SK-N-SH (cell line): ENCODE measurements at regions of chr17 and their contacts with region 1.

Region 1: GRCh38 chr17:75524953-75525719 is at the start of gene LLGL2:
- DNase-seq: peak; percentile 99
- H3K4me3 ChIP-seq: peak within 1 kb of the TSS; percentile 57 to 67
- H3K27ac ChIP-seq: no peak within 1 kb of the TSS; a peak in 1 of 4 replicates
- H3K4me1 ChIP-seq: peaks cover 0 to 14% of the 10 kb centered on the region in 2 experiments; a peak in 1 of 4 replicates
- H3K27me3 ChIP-seq: peaks cover 12% of the 10 kb centered on the region; the same call in 1 of the 2 replicates
- CTCF ChIP-seq: peak; percentile 45
- EP300 ChIP-seq: no peak
- RAD21 ChIP-seq: peak; percentile 49
- polyA plus RNA-seq, gene LLGL2: 4.4 and 6.7 TPM in 2 replicates

Region 2: DNA sequence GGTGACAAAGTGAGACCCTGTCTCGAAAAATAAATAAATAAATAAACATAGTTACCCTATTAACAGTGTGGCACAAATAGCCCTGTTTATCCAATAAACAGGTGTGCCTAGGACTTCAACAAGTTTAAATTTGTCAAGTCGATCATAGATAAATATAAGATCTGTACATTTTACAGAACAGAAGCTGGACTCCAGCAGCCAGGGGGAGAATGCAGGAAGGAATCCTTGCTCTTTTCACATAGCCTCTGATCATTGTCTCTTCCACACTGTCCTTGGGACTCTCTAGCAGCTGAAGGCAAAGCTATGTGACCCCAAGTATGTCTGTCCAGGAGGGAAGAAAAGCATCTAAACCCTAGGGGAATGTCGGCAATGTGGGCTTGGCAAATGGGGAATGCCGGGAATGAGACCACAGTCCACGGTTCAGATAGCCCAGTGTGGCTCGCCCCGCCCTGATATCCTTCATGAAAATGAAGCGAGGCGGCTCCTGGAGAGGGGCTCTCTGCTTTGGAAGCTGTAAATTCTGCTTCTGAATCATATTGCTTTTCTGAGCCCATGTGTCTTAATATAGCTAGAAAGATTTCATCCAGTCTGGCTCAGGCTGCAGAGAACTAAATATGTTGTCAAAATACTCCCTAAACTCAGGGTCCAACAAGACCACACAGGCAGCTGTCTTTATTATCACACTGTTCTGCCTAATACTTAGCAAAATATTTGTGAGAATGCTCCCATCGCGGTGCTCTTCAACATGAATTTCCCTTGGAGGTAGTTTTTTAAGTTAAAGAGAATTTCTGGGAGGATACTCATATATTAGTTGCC is 94.8 kb before region 1 on chr17:
- CTCF ChIA-PET with region 1: interaction called, 10 read pairs
- POLR2A ChIA-PET with region 1: no interaction called
- DNase-seq: no peak
- H3K4me3 ChIP-seq: no peak overlapping the region
- H3K27ac ChIP-seq: no peak overlapping the region
- H3K4me1 ChIP-seq: no peaks in the 10 kb centered on the region; a peak in 1 of 4 replicates
- H3K27me3 ChIP-seq: no peaks in the 10 kb centered on the region
- CTCF ChIP-seq: no peak
- EP300 ChIP-seq: no peak
- RAD21 ChIP-seq: no peak

Region 3: GRCh38 chr17:75539967-75540711 is 15.0 kb after region 1 on chr17:
- CTCF ChIA-PET with region 1: interaction called, 13 read pairs
- POLR2A ChIA-PET with region 1: interaction called, 3 read pairs
- DNase-seq: peak; percentile 70
- H3K4me3 ChIP-seq: no peak overlapping the region
- H3K27ac ChIP-seq: peak overlapping the region in 1 of 2 experiments; percentile 22; a peak in 1 of 4 replicates
- H3K4me1 ChIP-seq: peaks cover 0 to 15% of the 10 kb centered on the region in 2 experiments; a peak in 1 of 4 replicates
- H3K27me3 ChIP-seq: no peaks in the 10 kb centered on the region
- CTCF ChIP-seq: no peak
- EP300 ChIP-seq: no peak
- RAD21 ChIP-seq: no peak